ENCODE measurements at regions of chr18 and their contacts with region 1.

Region 1: DNA sequence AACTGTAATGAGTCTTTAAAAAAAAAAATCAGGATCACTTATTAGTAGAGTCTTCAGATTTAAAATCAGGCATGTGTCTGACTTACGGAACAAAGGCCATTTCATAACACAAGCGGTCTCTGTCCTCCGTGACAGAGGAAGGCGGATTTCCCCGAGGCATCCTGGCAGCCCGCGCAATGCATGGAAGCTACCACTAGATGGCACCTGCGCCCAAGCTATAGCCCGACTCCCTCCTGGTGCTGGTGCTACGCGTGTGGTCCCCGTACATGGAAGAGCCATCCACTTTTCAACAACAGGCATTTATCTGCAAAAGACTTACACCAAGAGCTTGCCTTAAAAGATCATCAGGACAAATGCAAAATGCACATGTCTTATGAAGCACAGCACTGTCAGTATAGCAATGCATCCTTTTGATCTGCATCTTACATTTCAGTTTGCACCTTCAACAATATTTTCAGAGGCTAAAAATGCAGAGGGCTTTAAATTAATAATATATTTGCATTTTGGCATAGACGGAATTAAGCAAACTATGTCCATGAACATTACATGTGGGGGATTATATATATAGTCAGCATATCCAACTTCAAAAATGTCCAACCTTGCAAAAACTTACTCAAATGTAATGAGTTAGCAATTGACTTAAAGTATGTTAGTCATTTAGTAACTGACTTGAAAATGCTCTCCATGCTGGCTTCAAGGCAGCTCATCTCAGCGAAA is 96.0 kb downstream of the ZNF516 start:
- DNase-seq: peak; percentile 79 to 82
- H3K4me3 ChIP-seq: no peak overlapping the region
- H3K27ac ChIP-seq: no peak overlapping the region
- H3K4me1 ChIP-seq: peaks cover 33 to 36% of the 10 kb centered on the region in 2 donors
- H3K27me3 ChIP-seq: no peaks in the 10 kb centered on the region
- CTCF ChIP-seq: peak; percentile 81 to 97 (median 96)
- POLR2A ChIP-seq: no peak

Region 2: GRCh38 chr18:76328140-76328539 is 70.9 kb before region 1 on chr18:
- intact Hi-C with region 1: no loop called
- DNase-seq: no peak
- H3K4me3 ChIP-seq: no peak overlapping the region
- H3K27ac ChIP-seq: no peak overlapping the region
- H3K4me1 ChIP-seq: no peaks in the 10 kb centered on the region
- H3K27me3 ChIP-seq: no peaks in the 10 kb centered on the region
- CTCF ChIP-seq: no peak
- POLR2A ChIP-seq: no peak

Region 3: GRCh38 chr18:76684265-76684664 is 285.2 kb after region 1 on chr18:
- intact Hi-C with region 1: loop called (anchors 2 kb)
- DNase-seq: no peak
- H3K4me3 ChIP-seq: no peak overlapping the region
- H3K27ac ChIP-seq: no peak overlapping the region
- H3K4me1 ChIP-seq: peaks cover 0 to 7% of the 10 kb centered on the region in 2 donors
- H3K27me3 ChIP-seq: no peaks in the 10 kb centered on the region
- CTCF ChIP-seq: no peak
- POLR2A ChIP-seq: no peak

Region 4: GRCh38 chr18:76709659-76710645 is 310.9 kb after region 1 on chr18:
- intact Hi-C with region 1: loop called (anchors 5 kb)
- DNase-seq: peak; percentile 67
- H3K4me3 ChIP-seq: no peak overlapping the region
- H3K27ac ChIP-seq: no peak overlapping the region
- H3K4me1 ChIP-seq: peaks cover 0 to 4% of the 10 kb centered on the region in 2 donors
- H3K27me3 ChIP-seq: no peaks in the 10 kb centered on the region
- CTCF ChIP-seq: peak; percentile 75 to 92 (median 85)
- POLR2A ChIP-seq: no peak

Measured in thyroid gland (tissue), 4 donors.